ENCODE measurements at regions of chr3 and their contacts with region 1.

Region 1: GRCh38 chr3:193997228-193998122 is 138.5 kb upstream of the HES1 start:
- DNase-seq: peak in 1 of 2 donors; percentile 61
- H3K4me3 ChIP-seq: no peak overlapping the region
- H3K27ac ChIP-seq: peak overlapping the region in 4 of 5 donors; percentile 1 to 69 (median 46)
- H3K4me1 ChIP-seq: peaks cover 8 to 24% (median 20%) of the 10 kb centered on the region in 4 donors
- H3K27me3 ChIP-seq: no peaks in the 10 kb centered on the region
- CTCF ChIP-seq: no peak
- EP300 ChIP-seq: no peak
- POLR2A ChIP-seq: no peak

Region 2: GRCh38 chr3:193805509-193805908 is 192.0 kb before region 1 on chr3:
- intact Hi-C with region 1: loop called (anchors 10 kb)
- DNase-seq: peak; percentile 67 to 90
- H3K4me3 ChIP-seq: no peak overlapping the region
- H3K27ac ChIP-seq: no peak overlapping the region
- H3K4me1 ChIP-seq: no peaks in the 10 kb centered on the region
- H3K27me3 ChIP-seq: no peaks in the 10 kb centered on the region
- CTCF ChIP-seq: no peak
- EP300 ChIP-seq: no peak
- POLR2A ChIP-seq: no peak

Region 3: GRCh38 chr3:194204042-194204987 is 206.8 kb after region 1 on chr3:
- intact Hi-C with region 1: no loop called
- DNase-seq: peak in 1 of 2 donors; percentile 42
- H3K4me3 ChIP-seq: peak overlapping the region; percentile 43 to 50 (median 46)
- H3K27ac ChIP-seq: peak overlapping the region in 3 of 5 donors; percentile 12 to 48 (median 21)
- H3K4me1 ChIP-seq: peaks cover 0 to 33% (median 18%) of the 10 kb centered on the region in 4 donors
- H3K27me3 ChIP-seq: peaks cover 0 to 20% (median 9%) of the 10 kb centered on the region in 3 donors
- CTCF ChIP-seq: no peak
- EP300 ChIP-seq: no peak
- POLR2A ChIP-seq: no peak